ENCODE measurements at regions of chr1 and their contacts with region 1.

Region 1: GRCh38 chr1:201137579-201138310 is 10.8 kb upstream of the ASCL5 start:
- DNase-seq: peak; percentile 36 to 93
- H3K4me3 ChIP-seq: no peak overlapping the region
- CTCF ChIP-seq: no peak
- POLR2A ChIP-seq: no peak

Region 2: GRCh38 chr1:201206176-201206575 is 68.4 kb after region 1 on chr1:
- intact Hi-C with region 1: loop called (anchors 10 kb)
- DNase-seq: no peak
- H3K4me3 ChIP-seq: no peak overlapping the region
- CTCF ChIP-seq: no peak
- POLR2A ChIP-seq: no peak